ENCODE measurements at regions of chr17 and their contacts with region 1.

Region 1: DNA sequence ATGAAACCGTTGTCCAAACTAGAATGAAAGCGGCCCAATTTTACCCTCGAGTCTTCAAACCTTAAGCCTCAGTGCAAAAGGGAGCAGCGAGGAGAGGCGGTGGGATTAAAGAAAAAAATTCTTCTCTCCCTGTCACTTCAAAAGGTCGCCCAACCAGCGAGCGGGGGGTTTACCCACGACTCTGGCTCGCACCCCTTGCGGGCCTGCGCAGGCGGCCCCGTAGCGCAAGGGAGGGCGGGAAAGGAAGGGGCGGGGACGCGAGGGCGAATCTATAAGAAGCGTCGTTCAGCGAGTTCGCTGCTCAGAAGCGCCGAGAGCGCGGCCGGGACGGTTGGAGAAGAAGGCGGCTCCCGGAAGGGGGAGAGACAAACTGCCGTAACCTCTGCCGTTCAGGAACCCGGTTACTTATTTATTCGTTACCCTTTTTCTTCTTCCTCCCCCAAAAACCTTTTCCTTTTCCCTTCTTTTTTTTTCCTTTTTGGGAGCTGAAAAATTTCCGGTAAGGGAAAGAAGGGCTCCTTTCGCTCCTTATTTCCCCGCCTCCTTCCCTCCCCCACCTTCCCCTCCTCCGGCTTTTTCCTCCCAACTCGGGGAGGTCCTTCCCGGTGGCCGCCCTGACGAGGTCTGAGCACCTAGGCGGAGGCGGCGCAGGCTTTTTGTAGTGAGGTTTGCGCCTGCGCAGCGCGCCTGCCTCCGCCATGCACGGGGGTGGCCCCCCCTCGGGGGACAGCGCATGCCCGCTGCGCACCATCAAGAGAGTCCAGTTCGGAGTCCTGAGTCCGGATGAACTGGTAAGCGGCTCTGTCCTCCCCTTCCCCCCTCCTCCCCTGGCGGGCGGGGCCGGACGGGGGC is at the start of gene POLR2A:
- DNase-seq: peak; percentile 96
- H3K4me3 ChIP-seq: peak within 1 kb of the TSS; percentile 92
- H3K27ac ChIP-seq: peak within 1 kb of the TSS; percentile 100
- H3K27me3 ChIP-seq: no peaks in the 10 kb centered on the region
- CTCF ChIP-seq: no peak
- polyA plus RNA-seq, gene POLR2A: 18.4 and 35.0 TPM in 2 replicates

Region 2: GRCh38 chr17:7435221-7435675 is 49.0 kb before region 1 on chr17 and contains the start of gene TMEM102:
- CTCF ChIA-PET with region 1: interaction called, 4 read pairs
- POLR2A ChIA-PET with region 1: interaction called, 16 read pairs
- DNase-seq: peak; percentile 78
- H3K4me3 ChIP-seq: peak within 1 kb of the TSS; percentile 45
- H3K27ac ChIP-seq: no peak within 1 kb of the TSS
- H3K27me3 ChIP-seq: peaks cover 26% of the 10 kb centered on the region
- CTCF ChIP-seq: no peak
- polyA plus RNA-seq, gene TMEM102: 1.0 and 1.1 TPM in 2 replicates

Region 3: DNA sequence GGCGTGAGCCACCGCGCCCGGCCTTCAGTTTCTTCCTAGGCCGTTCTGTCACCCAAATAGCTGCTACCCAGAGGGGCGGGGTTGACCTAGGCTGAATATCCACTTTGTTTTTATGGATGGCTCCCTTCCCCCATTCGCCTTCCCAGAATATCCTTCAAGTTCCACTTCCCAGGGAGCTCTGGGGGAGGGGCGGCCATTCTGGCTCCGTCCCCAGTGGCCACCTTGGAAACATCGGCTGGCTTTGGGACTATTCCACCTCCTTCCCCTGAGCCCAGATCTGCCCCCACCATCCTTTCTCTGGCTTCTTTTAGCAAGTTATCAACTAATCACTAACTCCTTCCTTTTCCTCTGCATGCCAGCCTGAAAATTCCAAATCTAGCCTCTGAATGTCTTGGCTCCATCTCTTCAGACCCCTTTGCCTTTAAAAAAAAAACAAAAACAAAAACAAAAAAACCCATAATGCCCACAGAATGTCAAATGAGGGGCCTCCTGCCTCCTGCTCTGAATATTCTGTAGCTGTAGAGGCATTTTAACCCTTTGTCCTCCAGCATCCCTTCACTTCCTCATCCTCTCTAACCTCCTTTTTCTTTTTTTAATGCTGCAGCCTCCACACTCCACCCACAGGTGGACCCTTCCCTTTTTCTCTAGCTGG is 172.8 kb after region 1 on chr17:
- CTCF ChIA-PET with region 1: no interaction called
- POLR2A ChIA-PET with region 1: no interaction called
- DNase-seq: no peak
- H3K4me3 ChIP-seq: no peak overlapping the region
- H3K27ac ChIP-seq: no peak overlapping the region
- H3K27me3 ChIP-seq: peaks cover 34% of the 10 kb centered on the region
- CTCF ChIP-seq: no peak

Measured in AG04450 (cell line).